MCF 10A (cell line): ENCODE measurements at regions of chr13 and their contacts with region 1.

Region 1: DNA sequence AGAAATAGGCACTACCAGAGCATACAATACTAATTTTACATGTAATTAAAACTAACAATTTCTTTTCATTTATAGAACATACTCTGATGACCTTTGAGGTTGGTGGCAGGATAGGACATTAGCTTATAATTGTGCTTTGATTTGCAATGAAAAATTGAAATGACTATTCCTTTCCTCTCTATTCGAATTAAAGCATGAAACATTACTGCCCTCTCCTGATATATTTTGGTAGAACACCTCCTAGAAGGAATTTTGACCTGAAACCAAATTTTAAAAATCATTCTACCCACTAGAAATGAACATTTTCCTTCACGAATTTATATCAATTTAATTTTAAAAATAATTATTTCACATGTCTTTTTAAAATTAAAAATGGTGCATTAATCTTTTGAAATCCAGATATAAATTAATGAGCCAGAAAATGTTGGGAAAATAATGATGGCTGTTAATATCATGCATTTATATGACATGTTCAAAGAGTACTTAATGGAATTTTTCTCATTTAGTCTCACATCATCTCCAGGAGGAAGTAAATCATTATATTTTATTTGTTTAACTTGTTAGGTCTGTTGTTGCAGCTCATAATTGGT is 556.3 kb upstream of the ARGLU1 start:
- DNase-seq: peak; percentile 45
- H3K4me3 Mint-ChIP-seq: no peak overlapping the region
- H3K27ac Mint-ChIP-seq: no peak overlapping the region
- H3K4me1 Mint-ChIP-seq: peaks cover 6% of the 10 kb centered on the region
- H3K27me3 Mint-ChIP-seq: no peaks in the 10 kb centered on the region
- CTCF ChIP-seq: peak; percentile 58

Region 2: DNA sequence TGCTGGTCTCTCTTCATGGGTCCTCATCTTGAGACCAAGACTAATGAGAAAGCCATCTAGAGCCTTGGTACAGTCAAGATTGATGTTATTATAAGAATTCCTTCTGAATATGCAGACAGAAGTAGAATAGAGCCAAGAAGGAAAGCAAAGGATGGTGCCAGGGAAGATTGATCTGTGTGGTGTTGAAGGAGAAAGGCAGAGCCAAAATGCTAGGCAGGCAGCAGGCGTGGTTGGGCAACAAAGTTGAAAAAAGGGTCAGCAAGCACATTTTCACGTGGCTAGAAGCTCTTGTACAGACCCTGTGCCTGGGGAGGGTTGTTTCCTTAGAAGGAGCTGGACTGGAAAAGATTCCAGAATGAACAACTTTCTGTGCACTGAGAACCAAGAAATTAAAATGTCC is 236.5 kb before region 1 on chr13:
- CTCF ChIA-PET with region 1: no interaction called
- POLR2A ChIA-PET with region 1: no interaction called
- intact Hi-C with region 1: no loop called
- DNase-seq: no peak
- H3K4me3 Mint-ChIP-seq: no peak overlapping the region
- H3K27ac Mint-ChIP-seq: no peak overlapping the region
- H3K4me1 Mint-ChIP-seq: no peaks in the 10 kb centered on the region
- H3K27me3 Mint-ChIP-seq: no peaks in the 10 kb centered on the region
- CTCF ChIP-seq: no peak

Region 3: DNA sequence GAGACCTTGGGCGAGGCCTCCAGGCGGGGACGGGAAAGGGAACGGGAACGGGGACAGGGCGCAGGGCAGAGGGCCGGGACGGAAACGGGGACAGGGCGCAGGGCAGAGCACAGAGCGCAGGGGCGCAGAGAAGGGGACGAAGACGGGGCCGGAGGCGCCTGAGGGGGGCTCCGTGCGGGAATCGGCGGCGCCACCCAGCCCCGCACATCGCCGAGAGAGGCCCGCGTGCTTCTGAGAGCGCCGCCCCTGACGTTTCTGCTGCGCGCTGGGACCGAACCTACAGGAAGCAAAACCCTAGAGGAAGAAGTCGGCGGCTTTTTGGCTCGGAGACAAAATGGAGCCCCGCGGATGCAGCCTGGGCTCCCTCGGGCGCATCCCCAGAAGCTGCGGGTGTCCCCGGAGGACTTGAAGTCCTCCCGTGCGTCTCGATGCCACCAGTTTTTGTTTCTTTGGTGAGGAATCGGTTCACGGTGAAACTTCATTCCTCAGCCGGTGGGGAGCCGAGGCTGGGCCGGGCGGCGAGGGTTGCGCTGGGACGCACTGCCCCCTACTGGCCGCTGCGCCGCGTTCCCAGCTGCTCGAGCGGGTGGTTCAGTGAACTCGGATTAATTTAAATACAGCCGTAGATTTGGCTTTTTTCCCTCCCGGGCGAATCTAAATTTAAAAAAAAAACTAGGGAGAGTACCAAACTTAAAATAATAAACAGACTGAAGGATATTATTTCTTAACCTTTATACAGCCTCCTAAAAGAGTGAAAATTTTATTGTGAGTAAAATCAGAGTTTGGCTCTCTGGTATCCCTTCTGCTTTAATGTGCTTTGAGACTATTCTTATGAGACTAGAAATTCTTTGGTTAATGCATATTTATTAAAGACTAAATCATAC is 206.3 kb before region 1 on chr13:
- CTCF ChIA-PET with region 1: interaction called, 3 read pairs
- POLR2A ChIA-PET with region 1: no interaction called
- intact Hi-C with region 1: loop called (anchors 1 kb)
- DNase-seq: peak; percentile 75
- H3K4me3 Mint-ChIP-seq: peak overlapping the region; percentile 74
- H3K27ac Mint-ChIP-seq: peak overlapping the region; percentile 31
- H3K4me1 Mint-ChIP-seq: no peaks in the 10 kb centered on the region
- H3K27me3 Mint-ChIP-seq: no peaks in the 10 kb centered on the region
- CTCF ChIP-seq: peak; percentile 90

Region 4: DNA sequence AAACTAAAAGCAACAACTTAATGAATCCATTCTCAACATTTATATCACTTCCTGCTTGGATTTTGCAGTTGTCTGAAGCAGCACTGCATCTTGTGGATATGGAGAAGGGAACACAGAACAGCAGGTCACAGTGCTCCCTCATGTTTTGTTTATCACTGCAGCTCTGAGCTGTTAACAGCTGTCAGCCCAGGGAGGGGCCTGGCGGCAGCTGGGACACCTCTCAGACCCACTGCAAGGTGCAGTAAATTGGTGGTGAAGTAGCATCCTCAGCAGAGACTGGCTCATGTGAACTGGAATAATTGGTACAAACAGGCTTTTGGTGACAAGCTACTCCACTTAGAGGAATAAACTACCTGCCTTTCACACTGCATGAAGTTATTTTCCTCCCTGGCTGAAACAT is 920.7 kb after region 1 on chr13:
- CTCF ChIA-PET with region 1: no interaction called
- POLR2A ChIA-PET with region 1: no interaction called
- intact Hi-C with region 1: no loop called
- DNase-seq: no peak
- H3K4me3 Mint-ChIP-seq: no peak overlapping the region
- H3K27ac Mint-ChIP-seq: no peak overlapping the region
- H3K4me1 Mint-ChIP-seq: no peaks in the 10 kb centered on the region
- H3K27me3 Mint-ChIP-seq: no peaks in the 10 kb centered on the region
- CTCF ChIP-seq: no peak